IMR-90 (cell line): ENCODE measurements at regions of chr17 and their contacts with region 1.

Region 1: DNA sequence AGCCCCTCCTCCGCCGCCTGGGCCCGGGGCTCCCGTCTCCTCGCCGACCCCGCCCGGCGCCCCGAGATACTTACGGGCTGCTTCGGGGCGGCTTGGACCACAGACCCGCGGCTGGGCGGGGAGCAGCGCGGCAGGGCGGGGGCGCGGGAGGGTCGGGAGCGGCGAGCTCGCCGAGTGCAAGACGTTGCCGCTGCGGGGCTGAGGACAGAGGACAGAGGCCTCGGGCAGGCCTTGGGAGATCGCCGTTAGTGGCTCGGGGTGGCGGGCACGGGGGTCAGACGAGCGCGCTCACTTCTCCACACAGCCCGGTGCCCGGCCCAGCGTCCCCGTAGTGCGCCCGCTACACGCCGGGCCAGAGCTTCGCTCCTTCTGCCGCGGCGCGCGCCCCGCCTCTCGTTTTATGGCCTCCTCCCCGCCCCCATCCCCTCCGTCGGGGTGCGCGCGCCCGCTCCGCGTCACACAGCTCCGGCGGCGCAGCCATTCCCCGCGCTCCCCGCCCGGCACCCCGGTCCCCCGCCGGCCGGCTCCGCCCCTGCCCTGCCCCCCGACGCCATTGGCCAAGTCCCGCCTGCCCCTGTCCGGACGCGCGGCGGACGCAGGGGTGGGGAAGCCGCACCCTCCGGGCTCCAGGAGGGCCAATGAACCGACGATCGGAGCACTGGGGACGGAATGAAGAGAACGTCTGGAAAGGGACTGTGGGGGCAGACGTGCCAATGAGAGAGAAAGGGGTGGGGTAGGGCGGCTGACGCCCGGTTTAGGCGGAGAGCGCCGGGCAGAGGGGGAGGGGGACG is at the start of gene TOB1:
- DNase-seq: peak; percentile 93
- ATAC-seq: peak; percentile 90
- H3K4me3 ChIP-seq: peak within 1 kb of the TSS; percentile 97
- H3K27ac ChIP-seq: peak within 1 kb of the TSS; percentile 90
- H3K4me1 ChIP-seq: peaks cover 4% of the 10 kb centered on the region
- H3K27me3 ChIP-seq: no peaks in the 10 kb centered on the region
- CTCF ChIP-seq: no peak
- POLR2A ChIP-seq: peak; percentile 100
- RAD21 ChIP-seq: no peak
- total RNA-seq, gene TOB1: 4.3 and 6.1 TPM in 2 replicates

Region 2: GRCh38 chr17:48970224-48970623 is 1896.0 kb before region 1 on chr17:
- CTCF ChIA-PET with region 1: no interaction called
- POLR2A ChIA-PET with region 1: no interaction called
- dilution Hi-C with region 1: no loop called
- in situ Hi-C with region 1: no loop called
- intact Hi-C with region 1: no loop called
- DNase-seq: no peak
- ATAC-seq: no peak
- H3K4me3 ChIP-seq: no peak overlapping the region
- H3K27ac ChIP-seq: no peak overlapping the region
- H3K4me1 ChIP-seq: peaks cover 22% of the 10 kb centered on the region
- H3K27me3 ChIP-seq: no peaks in the 10 kb centered on the region
- CTCF ChIP-seq: no peak
- POLR2A ChIP-seq: no peak
- RAD21 ChIP-seq: no peak

Region 3: GRCh38 chr17:50361561-50362480 is 504.4 kb before region 1 on chr17:
- CTCF ChIA-PET with region 1: no interaction called
- POLR2A ChIA-PET with region 1: no interaction called
- dilution Hi-C with region 1: no loop called
- in situ Hi-C with region 1: no loop called
- intact Hi-C with region 1: no loop called
- DNase-seq: peak; percentile 74
- ATAC-seq: peak; percentile 79
- H3K4me3 ChIP-seq: no peak overlapping the region
- H3K27ac ChIP-seq: no peak overlapping the region
- H3K4me1 ChIP-seq: peaks cover 11% of the 10 kb centered on the region
- H3K27me3 ChIP-seq: no peaks in the 10 kb centered on the region
- CTCF ChIP-seq: peak; percentile 75
- POLR2A ChIP-seq: no peak
- RAD21 ChIP-seq: peak; percentile 54

Region 4: DNA sequence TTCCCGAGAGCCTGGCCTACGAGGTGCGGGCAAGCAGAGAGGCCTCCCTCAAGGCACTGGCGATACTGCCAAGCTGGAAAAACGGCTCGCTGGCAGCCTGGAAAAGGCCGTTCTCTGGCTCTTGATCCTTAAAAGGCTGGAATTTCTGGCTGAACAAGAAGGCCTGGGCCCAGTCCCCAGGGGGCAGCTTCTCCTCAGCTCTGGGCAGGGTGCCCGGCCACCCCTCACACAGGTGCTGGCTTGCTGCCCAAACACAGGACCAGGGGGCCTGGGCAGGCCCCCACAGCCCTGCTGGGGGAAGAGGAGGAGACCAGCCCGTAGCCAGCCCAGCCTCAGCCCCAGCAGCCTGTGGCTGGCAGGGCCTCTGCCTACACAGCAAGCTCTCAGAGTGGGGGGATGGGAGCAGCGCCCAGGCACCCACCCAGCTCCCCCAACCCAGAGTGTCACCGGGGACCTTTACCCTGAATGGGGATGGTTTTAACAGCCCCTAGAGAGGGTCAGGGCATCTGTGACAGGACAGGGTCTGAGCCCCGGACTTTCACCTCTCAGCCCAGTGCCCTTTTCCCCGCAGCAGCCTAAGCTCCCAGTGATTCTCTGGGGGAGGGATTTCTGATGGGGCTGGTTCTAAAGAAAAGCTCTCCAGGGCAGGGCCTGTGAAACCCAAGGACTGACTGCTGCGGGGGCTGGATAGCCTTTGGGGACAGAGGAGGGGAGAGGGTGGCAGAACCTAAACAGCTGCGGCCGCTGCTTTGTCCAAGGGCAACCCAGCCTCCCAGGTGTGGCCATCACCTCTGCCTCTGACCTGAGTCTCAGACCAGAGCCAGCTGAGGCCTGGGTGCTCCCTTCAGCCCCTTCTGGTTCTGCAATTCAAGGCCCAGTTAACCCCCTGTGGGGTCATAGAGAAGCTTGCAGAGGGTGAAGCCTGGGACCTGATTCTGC is 38.6 kb after region 1 on chr17:
- CTCF ChIA-PET with region 1: interaction called, 3 read pairs
- POLR2A ChIA-PET with region 1: interaction called, 4 read pairs
- dilution Hi-C with region 1: no loop called
- in situ Hi-C with region 1: no loop called
- intact Hi-C with region 1: loop called (anchors 5 kb)
- DNase-seq: no peak
- ATAC-seq: peak; percentile 57
- H3K4me3 ChIP-seq: no peak overlapping the region
- H3K27ac ChIP-seq: peak overlapping the region; percentile 70
- H3K4me1 ChIP-seq: peaks cover 16% of the 10 kb centered on the region
- H3K27me3 ChIP-seq: peaks cover 6% of the 10 kb centered on the region
- CTCF ChIP-seq: no peak
- POLR2A ChIP-seq: no peak
- RAD21 ChIP-seq: no peak

Region 5: GRCh38 chr17:50931144-50931908 is 65.1 kb after region 1 on chr17:
- CTCF ChIA-PET with region 1: no interaction called
- POLR2A ChIA-PET with region 1: interaction called, 6 read pairs
- dilution Hi-C with region 1: no loop called
- in situ Hi-C with region 1: no loop called
- intact Hi-C with region 1: loop called (anchors 2 kb)
- DNase-seq: peak; percentile 86
- ATAC-seq: peak; percentile 90
- H3K4me3 ChIP-seq: peak overlapping the region; percentile 37
- H3K27ac ChIP-seq: peak overlapping the region; percentile 65
- H3K4me1 ChIP-seq: peaks cover 7% of the 10 kb centered on the region
- H3K27me3 ChIP-seq: no peaks in the 10 kb centered on the region
- CTCF ChIP-seq: no peak
- POLR2A ChIP-seq: no peak
- RAD21 ChIP-seq: peak; percentile 23

Region 6: DNA sequence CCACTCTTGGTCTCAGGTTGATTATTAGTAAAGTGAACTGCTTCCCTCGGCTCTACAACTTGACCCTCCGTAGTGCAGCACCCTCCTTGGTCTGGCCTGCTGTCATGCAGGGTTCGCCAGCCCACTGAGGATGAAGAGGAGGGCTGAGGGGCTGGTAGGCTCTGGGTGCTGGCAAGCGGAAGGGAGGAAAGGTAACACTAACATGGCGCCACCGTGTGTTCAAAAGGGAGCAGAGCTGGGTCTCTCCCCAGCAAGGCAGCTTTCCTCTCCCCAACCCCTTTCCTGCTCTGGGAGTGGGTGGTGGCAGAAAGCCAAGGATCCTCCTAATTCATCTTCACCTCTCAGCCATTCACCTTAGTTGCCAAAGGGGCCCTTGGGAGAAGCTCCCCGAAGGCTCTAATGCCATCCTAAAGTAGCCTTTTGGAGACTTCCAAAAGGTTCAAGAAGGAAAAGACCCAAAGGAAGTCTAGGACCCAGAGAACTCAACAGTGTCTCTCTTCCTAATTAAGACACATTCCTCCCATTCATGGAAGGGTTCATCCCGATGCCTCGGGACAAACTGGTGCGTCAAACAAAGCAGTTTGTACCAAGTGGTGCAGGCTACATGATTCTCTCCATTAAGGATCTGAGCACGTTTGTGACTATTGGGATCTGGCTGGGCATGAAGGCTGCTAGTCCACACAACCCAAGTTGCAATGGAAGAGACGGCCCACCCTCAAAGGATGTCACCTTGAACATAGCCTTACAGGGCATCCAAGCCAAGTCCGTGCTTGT is 90.8 kb after region 1 on chr17:
- CTCF ChIA-PET with region 1: no interaction called
- POLR2A ChIA-PET with region 1: interaction called, 13 read pairs
- dilution Hi-C with region 1: no loop called
- in situ Hi-C with region 1: loop called (anchors 5 kb)
- intact Hi-C with region 1: no loop called
- DNase-seq: peak; percentile 54
- ATAC-seq: peak; percentile 78
- H3K4me3 ChIP-seq: no peak overlapping the region
- H3K27ac ChIP-seq: no peak overlapping the region
- H3K4me1 ChIP-seq: peaks cover 20% of the 10 kb centered on the region
- H3K27me3 ChIP-seq: no peaks in the 10 kb centered on the region
- CTCF ChIP-seq: peak; percentile 78
- POLR2A ChIP-seq: peak; percentile 40; the same call in 1 of the 2 replicates
- RAD21 ChIP-seq: peak; percentile 78

Region 7: GRCh38 chr17:51132964-51133319 is 266.8 kb after region 1 on chr17:
- CTCF ChIA-PET with region 1: no interaction called
- POLR2A ChIA-PET with region 1: no interaction called
- dilution Hi-C with region 1: no loop called
- in situ Hi-C with region 1: no loop called
- intact Hi-C with region 1: no loop called
- DNase-seq: no peak
- ATAC-seq: 0 out of 2 replicates have a peak, but pooled peaks have one; percentile 21
- H3K4me3 ChIP-seq: no peak overlapping the region
- H3K27ac ChIP-seq: no peak overlapping the region
- H3K4me1 ChIP-seq: no peaks in the 10 kb centered on the region
- H3K27me3 ChIP-seq: no peaks in the 10 kb centered on the region
- CTCF ChIP-seq: no peak
- POLR2A ChIP-seq: no peak
- RAD21 ChIP-seq: no peak

Region 8: GRCh38 chr17:51147650-51148049 is 281.5 kb after region 1 on chr17:
- CTCF ChIA-PET with region 1: no interaction called
- POLR2A ChIA-PET with region 1: no interaction called
- dilution Hi-C with region 1: no loop called
- in situ Hi-C with region 1: loop called (anchors 10 kb)
- intact Hi-C with region 1: no loop called
- DNase-seq: peak; percentile 56
- ATAC-seq: peak; percentile 40
- H3K4me3 ChIP-seq: no peak overlapping the region
- H3K27ac ChIP-seq: no peak overlapping the region
- H3K4me1 ChIP-seq: no peaks in the 10 kb centered on the region
- H3K27me3 ChIP-seq: no peaks in the 10 kb centered on the region
- CTCF ChIP-seq: no peak
- POLR2A ChIP-seq: no peak
- RAD21 ChIP-seq: no peak